ENCODE measurements at regions of chr12 and their contacts with region 1.

Region 1: DNA sequence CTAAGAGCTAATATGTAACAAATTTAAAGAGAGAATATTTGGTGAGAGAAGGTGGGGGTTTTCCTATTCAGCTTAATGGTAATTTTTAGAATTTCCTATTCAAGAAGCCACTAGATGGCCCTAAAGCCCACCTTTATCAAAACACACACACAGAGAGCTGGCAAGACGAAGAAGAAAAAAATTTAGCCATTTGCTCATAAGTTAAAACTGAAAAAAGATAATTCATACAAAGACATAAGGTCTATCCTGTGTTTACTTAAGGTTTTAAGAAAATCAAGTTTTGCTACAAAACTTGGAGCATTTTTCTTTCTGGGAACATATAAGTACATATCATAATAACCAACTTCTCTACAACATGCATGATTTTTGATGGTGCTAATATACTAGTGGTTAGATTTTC is 46.8 kb upstream of the PCED1B start:
- DNase-seq: no peak
- ATAC-seq: peak; percentile 82
- H3K4me3 ChIP-seq: no peak overlapping the region
- H3K27ac ChIP-seq: no peak overlapping the region
- H3K4me1 ChIP-seq: no peaks in the 10 kb centered on the region
- H3K27me3 ChIP-seq: no peaks in the 10 kb centered on the region
- CTCF ChIP-seq: peak in 2 of 3 experiments; percentile 27 to 56; a peak in 2 of 6 replicates
- EP300 ChIP-seq: no peak
- POLR2A ChIP-seq: no peak
- RAD21 ChIP-seq: peak; percentile 82

Region 2: GRCh38 chr12:47071241-47071852 is 38.7 kb after region 1 on chr12:
- CTCF ChIA-PET with region 1: interaction called, 38 read pairs
- POLR2A ChIA-PET with region 1: no interaction called
- RAD21 ChIA-PET with region 1: interaction called, 10 read pairs
- SMC1A ChIA-PET with region 1: interaction called, 21 read pairs
- in situ Hi-C with region 1: no loop called
- intact Hi-C with region 1: no loop called
- DNase-seq: no peak
- ATAC-seq: no peak
- H3K4me3 ChIP-seq: no peak overlapping the region
- H3K27ac ChIP-seq: no peak overlapping the region
- H3K4me1 ChIP-seq: no peaks in the 10 kb centered on the region
- H3K27me3 ChIP-seq: no peaks in the 10 kb centered on the region; a peak in 1 of 4 replicates
- CTCF ChIP-seq: peak; percentile 43 to 45 (median 44); a peak in 5 of 6 replicates
- EP300 ChIP-seq: no peak
- POLR2A ChIP-seq: no peak
- RAD21 ChIP-seq: peak; percentile 22; the same call in 1 of the 2 replicates

Region 3: GRCh38 chr12:47307680-47308399 is 275.2 kb after region 1 on chr12:
- CTCF ChIA-PET with region 1: interaction called, 56 read pairs
- POLR2A ChIA-PET with region 1: no interaction called
- RAD21 ChIA-PET with region 1: interaction called, 31 read pairs
- SMC1A ChIA-PET with region 1: interaction called, 31 read pairs
- in situ Hi-C with region 1: loop called (anchors 5 kb)
- intact Hi-C with region 1: loop called (anchors 1 kb)
- DNase-seq: peak; percentile 31
- ATAC-seq: peak; percentile 96
- H3K4me3 ChIP-seq: no peak overlapping the region
- H3K27ac ChIP-seq: no peak overlapping the region
- H3K4me1 ChIP-seq: peaks cover 3% of the 10 kb centered on the region; the same call in 1 of the 2 replicates
- H3K27me3 ChIP-seq: no peaks in the 10 kb centered on the region
- CTCF ChIP-seq: peak; percentile 60 to 77 (median 67)
- EP300 ChIP-seq: no peak
- POLR2A ChIP-seq: no peak
- RAD21 ChIP-seq: peak; percentile 78

Region 4: DNA sequence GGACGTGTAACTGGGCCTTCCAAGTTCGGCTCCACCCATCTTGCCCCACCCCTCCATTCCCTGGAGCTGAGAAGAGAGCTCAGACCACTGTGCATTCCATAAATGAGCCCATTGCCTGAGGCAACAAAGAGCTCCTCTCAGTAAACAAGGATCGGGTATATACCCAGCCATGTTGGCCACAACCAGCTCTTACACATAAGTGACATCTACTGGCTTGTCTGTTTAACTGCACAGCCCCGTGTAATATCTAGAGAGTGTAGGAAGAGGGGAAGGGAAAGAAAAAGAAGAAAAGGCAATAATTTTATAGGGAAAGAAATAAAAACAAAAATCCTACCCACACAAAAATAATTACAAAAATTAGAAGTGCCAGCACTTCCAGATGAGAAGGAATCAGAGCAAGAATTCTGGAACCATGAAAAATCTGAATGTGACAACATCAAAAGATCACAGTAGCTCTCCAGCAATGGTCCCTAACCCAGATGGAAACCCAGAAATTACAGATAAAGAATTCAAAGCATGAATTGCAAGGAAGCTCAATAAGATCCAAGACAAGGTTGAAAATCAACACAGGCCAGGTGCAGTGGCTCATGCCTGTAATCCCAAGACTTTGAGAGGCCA is 365.1 kb after region 1 on chr12:
- CTCF ChIA-PET with region 1: interaction called, 25 read pairs
- POLR2A ChIA-PET with region 1: no interaction called
- RAD21 ChIA-PET with region 1: interaction called, 20 read pairs
- SMC1A ChIA-PET with region 1: interaction called, 12 read pairs
- in situ Hi-C with region 1: no loop called
- intact Hi-C with region 1: loop called (anchors 1 kb)
- DNase-seq: no peak
- ATAC-seq: peak; percentile 91
- H3K4me3 ChIP-seq: no peak overlapping the region
- H3K27ac ChIP-seq: no peak overlapping the region
- H3K4me1 ChIP-seq: no peaks in the 10 kb centered on the region
- H3K27me3 ChIP-seq: no peaks in the 10 kb centered on the region
- CTCF ChIP-seq: peak; percentile 43 to 50 (median 44); a peak in 5 of 6 replicates
- EP300 ChIP-seq: no peak
- POLR2A ChIP-seq: no peak
- RAD21 ChIP-seq: peak; percentile 72

Region 5: GRCh38 chr12:47636908-47637780 is 604.5 kb after region 1 on chr12:
- CTCF ChIA-PET with region 1: interaction called, 11 read pairs
- POLR2A ChIA-PET with region 1: no interaction called
- RAD21 ChIA-PET with region 1: interaction called, 13 read pairs
- SMC1A ChIA-PET with region 1: interaction called, 9 read pairs
- in situ Hi-C with region 1: no loop called
- intact Hi-C with region 1: no loop called
- DNase-seq: no peak
- ATAC-seq: no peak
- H3K4me3 ChIP-seq: no peak overlapping the region
- H3K27ac ChIP-seq: no peak overlapping the region
- H3K4me1 ChIP-seq: no peaks in the 10 kb centered on the region
- H3K27me3 ChIP-seq: no peaks in the 10 kb centered on the region
- CTCF ChIP-seq: peak; percentile 15 to 50 (median 47); a peak in 5 of 6 replicates
- EP300 ChIP-seq: no peak
- POLR2A ChIP-seq: no peak
- RAD21 ChIP-seq: 0 out of 2 replicates have a peak, but pooled peaks have one; percentile 7

Region 6: GRCh38 chr12:47686645-47687240 is 654.1 kb after region 1 on chr12:
- CTCF ChIA-PET with region 1: interaction called, 16 read pairs
- POLR2A ChIA-PET with region 1: no interaction called
- RAD21 ChIA-PET with region 1: interaction called, 16 read pairs
- SMC1A ChIA-PET with region 1: interaction called, 12 read pairs
- in situ Hi-C with region 1: loop called (anchors 10 kb)
- intact Hi-C with region 1: no loop called
- DNase-seq: no peak
- ATAC-seq: peak; percentile 66
- H3K4me3 ChIP-seq: no peak overlapping the region
- H3K27ac ChIP-seq: no peak overlapping the region
- H3K4me1 ChIP-seq: no peaks in the 10 kb centered on the region
- H3K27me3 ChIP-seq: no peaks in the 10 kb centered on the region
- CTCF ChIP-seq: peak; percentile 51 to 67 (median 56); a peak in 5 of 6 replicates
- EP300 ChIP-seq: no peak
- POLR2A ChIP-seq: no peak
- RAD21 ChIP-seq: peak; percentile 75

Measured in GM12878 (cell line).